Activated B cell treated with CpG ODN at 0.5 μM for 24 hours (primary cell): ENCODE measurements at regions of chrX and their contacts with region 1.

Region 1: DNA sequence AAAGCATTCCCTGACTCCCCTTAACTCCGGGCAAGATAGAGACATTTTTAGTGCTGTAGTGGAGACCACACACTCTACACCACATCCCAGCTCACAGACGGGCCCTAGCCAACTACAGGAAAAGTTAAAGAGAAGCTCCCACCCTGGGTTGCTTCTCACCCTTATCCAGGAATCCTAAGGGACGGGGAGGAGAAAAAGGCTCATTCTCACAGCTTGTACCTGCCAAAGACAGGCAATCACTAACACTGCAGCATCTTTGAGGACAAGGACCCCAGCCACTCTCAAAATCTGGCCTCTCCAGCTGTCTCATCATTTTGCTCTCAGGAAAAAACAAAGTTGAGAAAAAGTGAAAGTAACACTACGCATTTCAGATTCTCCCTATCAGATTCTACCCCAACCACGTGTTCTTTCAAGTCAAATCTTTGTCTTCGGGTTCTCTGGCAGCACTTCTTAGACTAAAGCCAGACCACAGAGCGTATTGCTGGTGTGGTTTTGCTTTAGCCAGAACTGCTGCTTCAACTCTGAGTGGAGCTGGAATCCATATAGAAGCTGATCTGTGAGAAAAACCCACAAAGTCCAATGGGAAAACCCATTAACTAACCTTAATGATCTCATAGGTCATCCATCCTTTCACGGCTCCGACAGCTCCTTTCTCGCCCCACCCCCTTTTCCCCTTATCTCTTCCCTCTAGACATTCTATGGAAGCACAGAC is 605.9 kb upstream of the DIPK2B start:
- DNase-seq: no peak
- ATAC-seq: peak; percentile 47
- H3K4me3 Mint-ChIP-seq: peak overlapping the region; percentile 79
- H3K27ac Mint-ChIP-seq: peak overlapping the region; percentile 36
- H3K4me1 Mint-ChIP-seq: peaks cover 24% of the 10 kb centered on the region
- H3K27me3 Mint-ChIP-seq: no peaks in the 10 kb centered on the region
- CTCF ChIP-seq: no peak

Region 2: DNA sequence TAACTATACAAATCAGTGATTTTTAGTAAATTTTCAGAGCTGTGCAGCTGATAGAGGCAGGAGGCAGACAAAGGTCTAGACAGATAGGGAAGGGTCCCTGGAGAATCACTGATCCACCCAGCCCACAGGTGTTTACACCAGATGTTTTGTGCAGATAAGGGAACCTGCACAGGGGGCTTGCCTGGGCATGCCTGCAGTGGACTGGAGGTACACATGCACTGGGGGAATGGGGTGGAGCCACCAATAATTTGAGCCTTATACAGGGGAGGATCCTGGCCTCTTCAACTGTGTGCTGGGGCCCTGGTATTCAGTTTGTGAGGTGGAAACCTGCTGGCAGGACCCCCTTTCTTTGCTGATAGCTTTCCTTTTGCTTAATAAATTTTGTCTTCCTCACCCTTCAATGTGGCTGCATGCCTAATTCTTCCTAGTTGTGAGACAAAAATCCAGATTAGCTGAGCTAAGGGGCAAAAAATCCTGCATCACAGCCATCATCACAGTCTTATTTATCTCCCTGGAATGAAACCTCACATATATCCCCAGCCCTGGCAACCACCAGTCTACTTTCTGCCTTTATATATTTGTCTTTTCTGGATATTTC is 830.8 kb before region 1 on chrX:
- CTCF ChIA-PET with region 1: no interaction called
- POLR2A ChIA-PET with region 1: no interaction called
- intact Hi-C with region 1: no loop called
- DNase-seq: no peak
- ATAC-seq: no peak
- H3K4me3 Mint-ChIP-seq: no peak overlapping the region
- H3K27ac Mint-ChIP-seq: no peak overlapping the region
- H3K4me1 Mint-ChIP-seq: peaks cover 10% of the 10 kb centered on the region
- H3K27me3 Mint-ChIP-seq: no peaks in the 10 kb centered on the region
- CTCF ChIP-seq: no peak

Region 3: GRCh38 chrX:45689971-45690370 is 116.6 kb before region 1 on chrX:
- CTCF ChIA-PET with region 1: no interaction called
- POLR2A ChIA-PET with region 1: no interaction called
- intact Hi-C with region 1: no loop called
- DNase-seq: no peak
- ATAC-seq: no peak
- H3K4me3 Mint-ChIP-seq: no peak overlapping the region
- H3K27ac Mint-ChIP-seq: no peak overlapping the region
- H3K4me1 Mint-ChIP-seq: no peaks in the 10 kb centered on the region
- H3K27me3 Mint-ChIP-seq: peaks cover 2% of the 10 kb centered on the region
- CTCF ChIP-seq: no peak

Region 4: GRCh38 chrX:45743081-45743533 is 63.5 kb before region 1 on chrX:
- CTCF ChIA-PET with region 1: no interaction called
- POLR2A ChIA-PET with region 1: no interaction called
- intact Hi-C with region 1: no loop called
- DNase-seq: no peak
- ATAC-seq: peak; percentile 42
- H3K4me3 Mint-ChIP-seq: no peak overlapping the region
- H3K27ac Mint-ChIP-seq: no peak overlapping the region
- H3K4me1 Mint-ChIP-seq: peaks cover 5% of the 10 kb centered on the region
- H3K27me3 Mint-ChIP-seq: no peaks in the 10 kb centered on the region
- CTCF ChIP-seq: no peak

Region 5: DNA sequence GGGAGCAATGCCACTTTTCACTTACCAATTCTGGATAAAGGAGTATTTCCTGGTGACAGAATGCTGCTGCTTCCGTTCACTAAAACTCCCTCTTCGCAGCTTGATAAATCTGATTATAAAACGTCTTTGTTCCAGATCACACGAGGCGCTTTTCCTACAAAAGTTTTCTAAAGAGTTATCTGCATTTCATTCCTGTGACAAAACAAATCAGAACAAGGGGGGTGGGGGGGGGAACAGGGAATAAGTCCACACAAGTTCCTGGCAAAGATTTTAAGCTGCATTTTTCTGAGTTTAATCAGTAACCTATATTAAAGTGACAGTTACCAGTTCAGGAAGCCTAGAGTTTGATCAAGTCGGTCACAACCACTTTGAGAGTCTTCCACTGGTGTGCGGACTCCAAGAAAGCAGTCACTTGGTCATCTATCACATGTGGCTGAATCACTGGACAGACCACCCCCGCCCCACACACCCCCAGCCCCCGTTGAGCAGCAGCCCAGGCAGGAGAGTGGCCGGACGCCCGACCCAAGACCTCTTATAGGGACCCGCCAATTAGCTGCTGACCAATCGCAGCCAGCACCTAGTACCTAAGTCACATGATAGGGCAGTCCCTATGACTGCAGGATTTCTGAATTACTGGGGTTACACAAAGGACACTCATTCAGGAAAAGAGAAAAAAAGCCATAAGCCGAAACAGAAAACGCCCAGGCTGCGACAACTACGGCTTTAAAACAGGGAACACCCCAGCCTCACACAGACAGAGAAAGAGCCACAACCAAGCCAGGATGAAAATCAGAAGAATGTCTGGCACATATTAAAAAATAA is 36.6 kb before region 1 on chrX:
- CTCF ChIA-PET with region 1: no interaction called
- POLR2A ChIA-PET with region 1: interaction called, 12 read pairs
- intact Hi-C with region 1: loop called (anchors 1 kb)
- DNase-seq: peak; percentile 28
- ATAC-seq: peak; percentile 76
- H3K4me3 Mint-ChIP-seq: peak overlapping the region; percentile 90
- H3K27ac Mint-ChIP-seq: peak overlapping the region; percentile 91
- H3K4me1 Mint-ChIP-seq: peaks cover 52% of the 10 kb centered on the region
- H3K27me3 Mint-ChIP-seq: no peaks in the 10 kb centered on the region
- CTCF ChIP-seq: no peak

Region 6: GRCh38 chrX:45872480-45872879 is 65.9 kb after region 1 on chrX:
- CTCF ChIA-PET with region 1: no interaction called
- POLR2A ChIA-PET with region 1: no interaction called
- intact Hi-C with region 1: no loop called
- DNase-seq: no peak
- ATAC-seq: no peak
- H3K4me3 Mint-ChIP-seq: no peak overlapping the region
- H3K27ac Mint-ChIP-seq: no peak overlapping the region
- H3K4me1 Mint-ChIP-seq: no peaks in the 10 kb centered on the region
- H3K27me3 Mint-ChIP-seq: no peaks in the 10 kb centered on the region
- CTCF ChIP-seq: no peak